ENCODE measurements at regions of chr13 and their contacts with region 1.

Region 1: DNA sequence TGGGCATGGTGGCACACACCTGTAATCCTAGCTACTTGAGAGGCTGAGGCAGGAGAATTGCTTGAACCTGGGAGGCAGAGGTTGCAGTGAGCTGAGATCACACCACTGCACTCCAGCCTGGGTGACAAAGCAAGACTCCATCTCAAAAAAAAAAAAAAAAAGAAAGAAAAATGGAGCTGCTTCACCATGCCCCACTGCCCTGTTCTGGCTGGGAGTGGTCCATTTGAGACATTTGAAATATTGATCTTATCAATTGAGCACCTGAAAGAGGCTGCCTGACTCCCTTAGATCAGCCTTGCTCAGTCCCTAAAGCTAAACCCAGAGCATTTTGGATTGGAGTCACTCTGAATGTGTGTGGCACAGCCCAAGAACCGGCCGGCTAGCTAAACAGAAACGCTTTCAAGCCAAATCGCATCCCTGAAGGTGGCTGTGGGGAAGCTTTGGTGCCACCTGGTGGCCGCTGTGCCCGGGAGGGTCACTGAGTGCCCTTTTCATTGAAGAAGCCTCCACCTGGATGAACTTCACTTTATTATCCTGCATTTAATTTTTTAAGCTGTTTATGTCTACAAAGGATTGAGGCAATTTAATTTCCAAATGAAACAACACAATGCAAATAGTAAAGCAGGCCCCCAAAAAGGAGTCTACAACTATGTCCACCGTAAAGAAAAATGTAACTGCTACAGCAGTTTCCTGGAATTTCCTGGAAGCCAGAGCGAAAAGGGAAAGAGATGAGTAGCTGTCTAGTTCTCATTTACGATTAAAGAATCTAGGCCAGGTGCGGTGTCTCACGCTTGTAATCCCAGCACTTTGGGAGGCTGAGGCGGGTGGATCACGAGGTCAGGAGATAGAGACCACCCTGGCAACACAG is 53.1 kb upstream of the SERPINE3 start:
- DNase-seq: peak; percentile 89
- ATAC-seq: peak; percentile 84
- H3K4me3 Mint-ChIP-seq: no peak overlapping the region
- H3K27ac Mint-ChIP-seq: no peak overlapping the region
- H3K4me1 Mint-ChIP-seq: peaks cover 45% of the 10 kb centered on the region
- H3K27me3 Mint-ChIP-seq: no peaks in the 10 kb centered on the region
- CTCF ChIP-seq: peak; percentile 89

Region 2: DNA sequence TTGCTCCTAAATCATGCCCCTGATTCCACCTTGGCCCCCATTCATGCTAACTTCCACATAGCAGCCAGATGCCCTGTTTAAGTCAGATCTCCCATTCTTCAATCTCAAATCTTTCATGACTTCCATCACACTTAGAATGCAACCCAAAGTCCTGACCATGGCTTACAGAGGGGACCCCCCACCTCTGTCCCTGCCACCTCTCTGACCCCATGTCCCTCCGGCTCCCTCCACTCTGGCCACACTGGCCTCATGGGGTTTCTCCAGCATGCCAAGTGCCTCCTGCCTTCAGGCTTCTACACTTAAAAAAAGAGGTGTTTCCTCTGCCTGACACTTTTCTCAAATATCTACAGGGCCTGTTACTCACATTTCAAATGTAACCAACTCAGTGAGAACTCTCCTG is 268.9 kb before region 1 on chr13:
- CTCF ChIA-PET with region 1: no interaction called
- POLR2A ChIA-PET with region 1: no interaction called
- DNase-seq: no peak
- ATAC-seq: no peak
- H3K4me3 Mint-ChIP-seq: no peak overlapping the region
- H3K27ac Mint-ChIP-seq: no peak overlapping the region
- H3K4me1 Mint-ChIP-seq: no peaks in the 10 kb centered on the region
- H3K27me3 Mint-ChIP-seq: no peaks in the 10 kb centered on the region
- CTCF ChIP-seq: no peak

Region 3: DNA sequence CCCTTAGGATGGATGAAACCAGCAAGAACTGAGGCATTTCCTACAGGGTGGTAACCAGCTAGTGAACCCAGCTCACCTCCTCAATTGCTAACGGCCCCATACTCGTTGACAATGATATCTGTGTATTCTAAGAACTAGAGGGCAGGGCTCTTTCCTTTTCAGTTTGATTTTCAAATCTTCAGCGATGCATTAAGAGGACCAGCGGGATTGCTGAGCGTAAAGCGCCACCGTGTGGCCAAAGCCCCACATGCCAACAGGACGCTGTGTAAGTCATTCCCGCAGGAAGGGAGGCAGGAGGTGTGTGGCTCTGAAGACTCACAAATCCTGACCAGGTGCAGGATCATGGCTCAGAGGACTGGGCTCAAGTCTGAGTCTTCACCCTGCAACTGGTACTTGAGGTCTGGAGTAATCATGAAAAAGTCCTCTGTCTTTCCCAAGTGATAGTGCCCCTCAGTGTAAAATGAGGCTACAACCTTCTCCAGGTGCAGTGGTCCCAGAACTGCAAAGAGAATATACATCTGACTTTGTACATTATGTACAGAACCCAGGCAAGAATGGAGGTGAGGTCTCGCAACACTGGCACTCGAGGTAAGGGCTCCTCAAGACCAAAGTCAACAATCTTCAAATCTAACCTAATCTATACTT is 216.2 kb before region 1 on chr13:
- CTCF ChIA-PET with region 1: interaction called, 14 read pairs
- POLR2A ChIA-PET with region 1: no interaction called
- DNase-seq: peak; percentile 93
- ATAC-seq: peak; percentile 87
- H3K4me3 Mint-ChIP-seq: no peak overlapping the region
- H3K27ac Mint-ChIP-seq: no peak overlapping the region
- H3K4me1 Mint-ChIP-seq: peaks cover 23% of the 10 kb centered on the region
- H3K27me3 Mint-ChIP-seq: peaks cover 7% of the 10 kb centered on the region
- CTCF ChIP-seq: peak; percentile 90

Region 4: DNA sequence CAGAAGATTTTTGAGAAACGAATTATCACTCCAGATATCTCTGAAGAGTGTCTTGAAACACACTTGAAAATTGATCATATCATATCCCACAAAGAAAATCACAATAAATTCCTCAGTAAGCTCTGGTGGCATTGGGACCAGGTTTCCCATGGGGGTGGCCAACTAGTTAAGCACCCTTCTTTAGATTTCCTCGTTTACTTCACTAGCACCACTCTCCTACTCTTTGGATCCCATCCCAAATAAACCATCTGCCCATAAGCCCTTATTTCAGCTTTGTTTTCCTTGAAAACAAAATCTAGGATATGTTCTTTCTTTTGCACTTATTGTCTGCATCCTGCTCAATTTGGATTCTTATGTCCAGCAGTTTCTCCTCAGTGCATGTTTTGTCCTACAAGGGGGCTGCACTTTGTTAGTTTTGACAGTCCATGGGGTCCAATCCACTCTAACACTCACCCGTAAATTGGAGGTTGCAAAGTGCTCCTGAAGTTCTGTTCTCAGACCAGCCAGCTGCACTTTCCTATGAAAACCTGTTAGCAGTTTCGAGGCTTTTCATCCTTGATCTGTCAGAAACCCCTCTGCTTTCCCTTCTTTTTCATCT is 104.5 kb before region 1 on chr13:
- CTCF ChIA-PET with region 1: interaction called, 26 read pairs
- POLR2A ChIA-PET with region 1: interaction called, 4 read pairs
- DNase-seq: no peak
- ATAC-seq: 0 out of 2 replicates have a peak, but pooled peaks have one; percentile 11
- H3K4me3 Mint-ChIP-seq: no peak overlapping the region
- H3K27ac Mint-ChIP-seq: peak overlapping the region; percentile 20
- H3K4me1 Mint-ChIP-seq: peaks cover 48% of the 10 kb centered on the region
- H3K27me3 Mint-ChIP-seq: no peaks in the 10 kb centered on the region
- CTCF ChIP-seq: no peak

Region 5: DNA sequence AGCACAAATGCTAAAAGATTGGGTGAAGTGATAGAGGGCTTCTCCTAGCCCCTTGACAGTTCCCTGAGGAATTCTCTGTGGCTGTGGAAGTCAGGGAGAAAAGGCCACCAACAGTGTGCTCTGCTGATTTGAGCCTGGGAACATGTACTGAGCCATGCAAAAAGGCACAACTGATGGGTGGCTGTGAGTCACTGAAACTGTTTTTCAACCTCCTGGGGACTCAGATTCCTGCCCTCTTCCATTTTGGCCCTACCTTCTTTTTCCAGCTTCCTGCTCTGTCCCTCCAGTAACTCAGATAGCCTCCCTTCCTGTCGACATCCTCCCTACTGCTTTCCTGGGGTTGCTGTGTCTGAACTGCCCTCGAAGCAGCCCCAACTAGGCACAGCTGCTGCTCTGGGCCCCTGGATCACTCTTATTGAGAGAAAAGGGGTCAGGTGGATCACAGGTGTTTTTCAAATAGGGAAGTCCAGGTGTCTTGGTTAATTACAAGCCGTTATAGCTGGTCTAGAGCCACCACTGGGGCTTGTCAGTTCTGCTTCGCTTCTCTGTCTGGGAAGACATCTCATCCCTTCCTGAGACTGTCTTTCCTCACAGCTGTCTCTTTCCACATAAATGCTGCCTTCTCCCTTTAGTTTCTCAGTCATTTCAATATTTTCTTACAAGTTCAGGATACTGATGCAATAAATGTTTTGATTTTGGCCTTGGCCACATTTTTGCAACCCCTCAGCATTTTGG is 50.4 kb before region 1 on chr13:
- CTCF ChIA-PET with region 1: interaction called, 22 read pairs
- POLR2A ChIA-PET with region 1: interaction called, 3 read pairs
- DNase-seq: no peak
- ATAC-seq: peak; percentile 62
- H3K4me3 Mint-ChIP-seq: 0 out of 2 replicates have a peak overlapping the region, but pooled peaks have one; percentile 18
- H3K27ac Mint-ChIP-seq: peak overlapping the region; percentile 98
- H3K4me1 Mint-ChIP-seq: peaks cover 54% of the 10 kb centered on the region
- H3K27me3 Mint-ChIP-seq: no peaks in the 10 kb centered on the region
- CTCF ChIP-seq: no peak

Region 6: GRCh38 chr13:51269039-51269438 is 17.3 kb before region 1 on chr13:
- CTCF ChIA-PET with region 1: interaction called, 30 read pairs
- POLR2A ChIA-PET with region 1: interaction called, 7 read pairs
- DNase-seq: no peak
- ATAC-seq: no peak
- H3K4me3 Mint-ChIP-seq: no peak overlapping the region
- H3K27ac Mint-ChIP-seq: peak overlapping the region; percentile 64; the same call in 1 of the 2 replicates
- H3K4me1 Mint-ChIP-seq: peaks cover 40% of the 10 kb centered on the region
- H3K27me3 Mint-ChIP-seq: no peaks in the 10 kb centered on the region
- CTCF ChIP-seq: no peak

Region 7: GRCh38 chr13:51324714-51325420 is 38.5 kb after region 1 on chr13:
- CTCF ChIA-PET with region 1: interaction called, 10 read pairs
- POLR2A ChIA-PET with region 1: no interaction called
- DNase-seq: peak; percentile 62
- ATAC-seq: peak; percentile 40
- H3K4me3 Mint-ChIP-seq: no peak overlapping the region
- H3K27ac Mint-ChIP-seq: no peak overlapping the region
- H3K4me1 Mint-ChIP-seq: peaks cover 48% of the 10 kb centered on the region
- H3K27me3 Mint-ChIP-seq: peaks cover 6% of the 10 kb centered on the region; the same call in 1 of the 2 replicates
- CTCF ChIP-seq: no peak

Measured in WTC11 (cell line).